PC-3 (cell line): ENCODE measurements at regions of chr14 and their contacts with region 1.

Region 1: DNA sequence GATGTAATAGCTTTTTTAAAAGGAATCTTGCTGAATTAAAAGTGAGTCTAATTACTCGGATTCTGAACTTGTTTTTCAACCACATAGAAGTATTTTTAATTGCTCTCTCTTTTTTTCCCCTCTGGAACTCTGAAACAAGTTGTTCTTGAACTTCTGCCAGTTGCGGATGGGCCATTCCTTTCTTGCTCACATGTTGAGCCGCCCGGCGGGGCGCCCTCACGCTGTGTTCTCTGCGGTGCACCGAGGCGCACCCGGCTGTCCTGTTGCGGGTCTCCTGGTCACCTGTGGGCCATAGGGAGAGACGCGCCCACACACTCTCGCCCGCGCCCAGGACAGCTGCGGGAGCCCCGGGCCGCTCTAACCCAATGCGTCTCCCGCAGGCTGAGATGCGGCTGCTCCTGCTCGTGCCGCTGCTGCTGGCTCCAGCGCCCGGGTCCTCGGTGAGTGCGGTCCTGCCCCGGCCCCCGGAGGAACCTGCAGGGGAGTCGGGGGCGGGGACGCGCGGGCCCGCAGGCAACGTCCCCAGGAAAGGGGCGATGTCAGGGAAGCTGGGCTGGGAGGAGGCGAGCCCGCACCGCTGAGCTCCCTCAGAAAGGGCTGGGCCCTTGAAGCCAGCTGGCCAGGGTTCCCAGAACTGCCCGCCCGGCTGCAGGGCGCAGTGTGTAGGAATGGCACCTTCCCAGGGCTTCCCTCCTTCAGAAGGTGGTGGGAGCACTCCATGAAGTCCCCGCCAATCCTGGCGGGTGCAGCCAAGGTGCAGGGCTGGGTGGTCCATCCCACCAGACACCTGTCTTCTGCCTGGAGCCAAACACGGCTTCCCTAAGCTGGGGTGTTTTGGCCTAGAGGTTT is 2.3 kb downstream of the PAPLN start:
- DNase-seq: peak; percentile 47
- ATAC-seq: peak; percentile 12
- H3K4me3 ChIP-seq: peak overlapping the region; percentile 62
- H3K27ac ChIP-seq: no peak overlapping the region
- H3K4me1 ChIP-seq: peaks cover 30% of the 10 kb centered on the region
- H3K27me3 ChIP-seq: peaks cover 50% of the 10 kb centered on the region
- CTCF ChIP-seq: peak; percentile 25; the same call in 1 of the 2 replicates

Region 2: GRCh38 chr14:73209953-73210352 is 29.7 kb before region 1 on chr14:
- CTCF ChIA-PET with region 1: interaction called, 3 read pairs
- POLR2A ChIA-PET with region 1: interaction called, 3 read pairs
- intact Hi-C with region 1: loop called (anchors 1 kb)
- DNase-seq: peak; percentile 96
- ATAC-seq: peak; percentile 99
- H3K4me3 ChIP-seq: peak overlapping the region; percentile 15; the same call in 1 of the 2 replicates
- H3K27ac ChIP-seq: peak overlapping the region; percentile 86
- H3K4me1 ChIP-seq: peaks cover 28% of the 10 kb centered on the region
- H3K27me3 ChIP-seq: no peaks in the 10 kb centered on the region
- CTCF ChIP-seq: no peak

Region 3: DNA sequence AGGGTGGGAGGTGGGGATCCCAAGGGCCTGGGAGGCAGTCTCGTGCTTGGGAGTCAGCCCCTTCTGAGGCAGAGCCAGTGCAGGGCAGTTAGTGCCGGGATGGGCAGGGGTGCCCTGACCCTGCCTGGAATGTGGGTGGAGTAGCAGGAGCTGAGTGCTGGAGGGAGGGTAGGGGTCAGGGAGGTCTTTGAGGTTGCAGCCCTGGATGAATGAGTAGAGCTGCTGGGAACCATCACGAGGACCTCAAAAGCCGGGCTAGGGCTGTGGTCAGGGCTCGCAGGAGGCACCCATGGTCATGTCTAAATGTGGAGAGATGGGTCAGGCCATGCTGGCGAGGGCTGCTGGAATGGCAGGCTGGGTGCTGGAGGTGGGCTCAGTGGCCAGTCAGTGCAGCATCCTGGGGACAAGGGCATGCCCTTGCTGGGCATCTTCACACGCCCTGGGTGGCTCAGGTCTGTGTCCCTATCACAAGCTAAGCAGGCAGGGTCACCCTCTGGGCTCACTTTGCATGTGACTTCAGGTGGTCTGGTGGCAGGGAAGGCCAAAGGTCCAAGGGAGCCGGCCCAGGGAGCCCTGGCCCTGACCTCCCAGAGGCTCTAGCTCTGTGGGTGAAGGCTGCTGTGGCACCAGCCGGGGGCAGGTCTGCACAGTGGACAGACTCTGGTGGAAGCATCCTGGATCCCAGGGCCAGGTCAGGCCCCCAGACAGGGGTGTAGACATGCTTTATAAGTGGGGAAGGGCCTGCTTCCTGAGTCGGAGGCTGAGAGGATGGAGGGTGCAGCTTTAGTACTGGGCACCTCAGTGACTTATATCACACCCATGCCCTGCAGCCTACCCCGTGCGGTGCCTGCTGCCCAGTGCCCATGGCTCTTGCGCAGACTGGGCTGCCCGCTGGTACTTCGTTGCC is 22.2 kb after region 1 on chr14:
- CTCF ChIA-PET with region 1: no interaction called
- POLR2A ChIA-PET with region 1: interaction called, 23 read pairs
- intact Hi-C with region 1: no loop called
- DNase-seq: no peak
- ATAC-seq: no peak
- H3K4me3 ChIP-seq: no peak overlapping the region
- H3K27ac ChIP-seq: no peak overlapping the region
- H3K4me1 ChIP-seq: no peaks in the 10 kb centered on the region
- H3K27me3 ChIP-seq: no peaks in the 10 kb centered on the region
- CTCF ChIP-seq: no peak

Region 4: DNA sequence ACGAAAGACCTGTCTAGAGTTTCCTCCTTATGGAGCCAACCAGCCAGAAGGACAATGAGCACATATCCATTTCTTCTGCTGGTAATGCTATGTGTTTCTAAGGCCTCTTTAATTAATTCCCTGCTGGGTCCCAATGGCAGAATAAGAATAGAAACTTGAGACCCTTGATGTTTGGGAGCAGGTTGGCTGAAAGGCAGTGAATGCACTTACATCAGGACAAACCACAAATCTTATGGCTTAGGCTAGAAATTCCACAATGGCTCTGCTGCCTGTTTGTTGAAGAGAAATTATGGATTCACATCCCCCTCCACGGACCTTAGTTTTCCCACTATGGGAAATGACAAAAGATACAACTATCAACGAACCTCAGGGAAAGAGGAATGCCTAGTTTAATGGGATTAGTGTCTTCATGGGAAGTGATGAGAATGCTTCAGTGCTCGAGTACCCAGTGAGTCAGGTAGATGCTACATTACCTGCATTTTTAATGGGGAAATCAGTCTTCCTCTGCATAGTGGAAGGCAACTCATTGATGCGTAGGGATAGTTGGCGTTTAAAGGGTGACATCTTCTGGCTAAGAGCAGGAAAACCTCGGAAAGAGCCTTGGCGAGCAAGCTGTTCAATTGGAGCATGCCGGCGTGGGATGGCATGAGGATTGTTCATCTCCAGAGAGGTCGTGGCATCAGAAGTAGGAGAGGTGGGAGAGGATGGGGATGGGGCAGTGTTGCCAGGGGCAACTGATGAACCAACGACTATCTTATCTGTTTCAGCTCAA is 44.2 kb after region 1 on chr14:
- CTCF ChIA-PET with region 1: interaction called, 3 read pairs
- POLR2A ChIA-PET with region 1: no interaction called
- intact Hi-C with region 1: loop called (anchors 2 kb)
- DNase-seq: peak; percentile 75
- ATAC-seq: peak; percentile 76
- H3K4me3 ChIP-seq: no peak overlapping the region
- H3K27ac ChIP-seq: no peak overlapping the region
- H3K4me1 ChIP-seq: peaks cover 9% of the 10 kb centered on the region; the same call in 1 of the 2 replicates
- H3K27me3 ChIP-seq: no peaks in the 10 kb centered on the region
- CTCF ChIP-seq: peak; percentile 86